ENCODE measurements at regions of chr3 and their contacts with region 1.

Region 1: DNA sequence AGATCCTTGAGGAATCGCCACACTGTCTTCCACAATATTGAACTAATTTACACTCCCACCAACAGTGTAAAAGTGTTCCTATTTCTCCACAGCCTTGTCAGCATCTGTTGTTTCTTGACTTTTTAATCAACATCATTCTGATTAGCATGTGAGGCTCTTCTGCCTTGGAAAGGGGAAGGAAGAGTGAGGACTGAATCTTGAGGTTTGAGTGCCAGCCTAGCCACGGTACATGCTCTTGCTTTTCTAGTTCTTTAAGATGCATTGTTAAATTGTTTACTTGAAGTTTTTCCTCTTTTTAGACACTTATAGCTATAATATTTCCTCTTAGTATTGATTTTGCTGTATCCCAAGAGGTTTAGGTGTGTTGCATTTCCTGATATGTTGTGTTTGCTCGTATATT is 596.1 kb downstream of the OTOL1 start:
- DNase-seq: no peak
- H3K27ac ChIP-seq: no peak overlapping the region
- CTCF ChIP-seq: no peak

Region 2: DNA sequence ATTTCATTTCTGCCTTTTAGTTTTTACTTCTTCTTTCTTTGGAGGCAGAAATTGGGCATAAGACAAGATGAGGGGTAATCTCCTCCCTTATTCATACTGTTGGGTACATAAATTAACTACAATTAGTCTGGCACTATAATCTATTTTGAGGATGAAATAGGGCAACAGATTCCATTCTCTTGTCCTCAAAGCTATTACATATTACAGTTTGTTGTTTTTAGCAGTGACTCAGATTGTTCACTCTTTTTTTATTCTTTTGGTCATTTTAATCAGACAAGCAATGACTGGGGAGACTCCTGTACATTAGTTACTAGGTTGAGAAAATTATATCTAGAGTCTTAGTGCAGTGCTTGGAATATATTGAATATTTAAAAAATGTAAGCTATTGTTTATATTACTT is 40.1 kb before region 1 on chr3:
- CTCF ChIA-PET with region 1: interaction called, 10 read pairs
- POLR2A ChIA-PET with region 1: no interaction called
- DNase-seq: no peak
- H3K27ac ChIP-seq: no peak overlapping the region
- CTCF ChIP-seq: no peak

Region 3: GRCh38 chr3:162269636-162270458 is 177.1 kb after region 1 on chr3:
- CTCF ChIA-PET with region 1: no interaction called
- POLR2A ChIA-PET with region 1: no interaction called
- DNase-seq: no peak
- H3K27ac ChIP-seq: no peak overlapping the region
- CTCF ChIP-seq: no peak

Measured in RWPE1 (cell line).